ENCODE measurements at regions of chr7 and their contacts with region 1.

Region 1: GRCh38 chr7:105024743-105025142 is 10.7 kb downstream of the KMT2E start:
- DNase-seq: no peak
- H3K4me3 Mint-ChIP-seq: no peak overlapping the region
- H3K27ac Mint-ChIP-seq: peak overlapping the region; percentile 8
- H3K4me1 Mint-ChIP-seq: peaks cover 87% of the 10 kb centered on the region
- H3K27me3 Mint-ChIP-seq: no peaks in the 10 kb centered on the region

Region 2: GRCh38 chr7:105003275-105003674 is 21.5 kb before region 1 on chr7:
- CTCF ChIA-PET with region 1: interaction called, 5 read pairs
- intact Hi-C with region 1: loop called (anchors 2 kb)
- DNase-seq: peak; percentile 67
- H3K4me3 Mint-ChIP-seq: peak overlapping the region; percentile 49
- H3K27ac Mint-ChIP-seq: peak overlapping the region; percentile 73
- H3K4me1 Mint-ChIP-seq: peaks cover 84% of the 10 kb centered on the region
- H3K27me3 Mint-ChIP-seq: no peaks in the 10 kb centered on the region

Region 3: GRCh38 chr7:105046414-105046813 is 21.7 kb after region 1 on chr7:
- CTCF ChIA-PET with region 1: no interaction called
- intact Hi-C with region 1: loop called (anchors 2 kb)
- DNase-seq: no peak
- H3K4me3 Mint-ChIP-seq: no peak overlapping the region
- H3K27ac Mint-ChIP-seq: no peak overlapping the region
- H3K4me1 Mint-ChIP-seq: peaks cover 36% of the 10 kb centered on the region
- H3K27me3 Mint-ChIP-seq: no peaks in the 10 kb centered on the region

Region 4: GRCh38 chr7:105098863-105099515 is 74.2 kb after region 1 on chr7:
- CTCF ChIA-PET with region 1: no interaction called
- intact Hi-C with region 1: loop called (anchors 2 kb)
- DNase-seq: no peak
- H3K4me3 Mint-ChIP-seq: no peak overlapping the region
- H3K27ac Mint-ChIP-seq: peak overlapping the region; percentile 73
- H3K4me1 Mint-ChIP-seq: peaks cover 59% of the 10 kb centered on the region
- H3K27me3 Mint-ChIP-seq: no peaks in the 10 kb centered on the region

Region 5: DNA sequence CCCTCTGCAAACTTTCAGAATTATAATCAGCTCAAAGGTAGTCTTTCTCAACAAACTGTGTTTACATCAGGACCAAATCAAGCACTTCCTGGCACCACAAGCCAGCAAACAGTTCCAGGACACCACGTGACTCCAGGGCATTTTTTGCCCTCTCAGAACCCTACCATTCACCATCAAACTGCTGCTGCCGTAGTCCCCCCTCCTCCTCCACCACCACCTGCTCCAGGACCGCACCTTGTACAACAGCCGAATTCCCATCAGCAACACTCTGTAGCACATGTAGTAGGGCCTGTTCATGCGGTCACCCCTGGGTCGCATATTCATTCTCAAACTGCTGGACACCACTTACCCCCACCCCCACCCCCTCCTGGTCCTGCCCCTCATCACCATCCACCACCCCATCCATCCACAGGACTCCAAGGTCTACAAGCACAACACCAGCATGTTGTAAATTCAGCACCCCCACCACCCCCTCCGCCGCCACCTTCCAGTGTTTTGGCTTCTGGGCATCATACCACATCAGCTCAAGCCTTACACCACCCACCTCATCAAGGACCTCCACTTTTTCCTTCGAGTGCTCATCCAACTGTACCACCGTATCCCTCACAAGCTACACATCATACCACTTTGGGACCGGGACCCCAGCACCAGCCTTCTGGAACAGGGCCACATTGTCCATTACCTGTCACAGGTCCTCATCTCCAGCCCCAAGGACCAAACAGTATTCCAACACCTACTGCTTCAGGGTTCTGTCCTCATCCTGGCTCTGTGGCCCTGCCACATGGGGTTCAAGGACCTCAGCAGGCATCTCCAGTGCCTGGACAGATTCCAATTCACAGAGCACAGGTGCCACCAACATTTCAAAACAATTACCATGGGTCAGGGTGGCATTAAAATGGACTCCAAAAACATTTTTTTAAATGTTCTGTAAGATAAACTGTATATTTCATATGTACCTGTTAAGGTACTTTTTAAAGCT is 88.0 kb after region 1 on chr7:
- CTCF ChIA-PET with region 1: no interaction called
- intact Hi-C with region 1: no loop called
- DNase-seq: no peak
- H3K4me3 Mint-ChIP-seq: no peak overlapping the region
- H3K27ac Mint-ChIP-seq: peak overlapping the region; percentile 81
- H3K4me1 Mint-ChIP-seq: peaks cover 8% of the 10 kb centered on the region
- H3K27me3 Mint-ChIP-seq: no peaks in the 10 kb centered on the region